Sciatic nerve (tissue), 2 donors: ENCODE measurements at regions of chr12 and their contacts with region 1.

Region 1: DNA sequence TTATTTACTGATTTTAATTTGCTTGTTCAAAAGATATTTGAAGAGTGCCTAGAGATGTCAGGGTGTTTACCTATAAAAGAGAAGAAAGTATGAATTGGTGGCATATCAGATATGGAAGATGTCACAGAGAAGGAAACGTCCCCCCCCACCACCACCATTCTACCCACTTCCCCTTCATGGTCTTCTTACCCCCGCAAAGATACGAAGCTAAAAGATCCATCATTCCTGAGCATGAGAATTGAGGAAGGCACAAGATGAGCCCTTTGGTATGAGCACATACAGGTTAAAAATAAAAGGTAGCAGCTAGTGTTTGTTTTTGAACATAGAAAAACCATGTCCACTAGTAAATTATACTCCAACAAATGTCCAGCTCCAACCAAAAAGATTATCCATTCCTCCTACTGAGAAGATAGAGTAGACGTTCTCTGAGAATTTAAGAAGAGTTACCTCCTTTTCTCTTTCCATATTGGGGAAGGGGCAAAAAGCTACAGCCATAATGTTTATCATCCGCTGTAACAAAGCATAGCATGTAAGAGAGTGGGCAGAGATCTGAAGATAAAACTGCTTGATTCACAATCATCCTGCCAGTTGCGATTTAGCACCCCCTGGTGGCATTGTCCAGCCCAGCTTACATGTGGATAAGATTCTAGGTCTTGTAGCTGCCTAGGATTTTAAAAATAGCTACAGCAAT is 29.1 kb downstream of the NFYB start:
- DNase-seq: peak; percentile 92
- ATAC-seq: peak; percentile 92

Region 2: DNA sequence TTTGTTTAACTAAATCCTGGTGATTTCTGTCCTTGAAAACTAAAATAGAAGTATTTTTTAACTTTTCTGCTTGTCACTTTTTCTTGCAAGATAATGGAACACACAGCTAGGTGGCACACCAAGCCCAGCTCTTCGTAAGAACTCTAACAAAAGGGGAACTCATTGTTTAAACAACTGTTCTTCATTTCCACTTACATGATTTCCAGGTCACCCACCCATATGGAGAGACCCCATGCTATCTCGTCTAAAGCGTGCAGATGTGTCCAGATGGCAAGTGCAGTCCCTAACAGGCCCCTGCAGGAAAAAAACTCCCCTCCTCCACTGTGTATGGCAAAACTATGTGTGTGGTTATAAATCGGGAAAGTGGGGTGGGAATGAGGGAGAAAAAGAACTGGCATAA is 224.6 kb before region 1 on chr12:
- intact Hi-C with region 1: loop called (anchors 10 kb)
- DNase-seq: no peak
- ATAC-seq: peak; percentile 63